Heart left ventricle (tissue), 16 donors: ENCODE measurements at regions of chr10 and their contacts with region 1.

Region 1: DNA sequence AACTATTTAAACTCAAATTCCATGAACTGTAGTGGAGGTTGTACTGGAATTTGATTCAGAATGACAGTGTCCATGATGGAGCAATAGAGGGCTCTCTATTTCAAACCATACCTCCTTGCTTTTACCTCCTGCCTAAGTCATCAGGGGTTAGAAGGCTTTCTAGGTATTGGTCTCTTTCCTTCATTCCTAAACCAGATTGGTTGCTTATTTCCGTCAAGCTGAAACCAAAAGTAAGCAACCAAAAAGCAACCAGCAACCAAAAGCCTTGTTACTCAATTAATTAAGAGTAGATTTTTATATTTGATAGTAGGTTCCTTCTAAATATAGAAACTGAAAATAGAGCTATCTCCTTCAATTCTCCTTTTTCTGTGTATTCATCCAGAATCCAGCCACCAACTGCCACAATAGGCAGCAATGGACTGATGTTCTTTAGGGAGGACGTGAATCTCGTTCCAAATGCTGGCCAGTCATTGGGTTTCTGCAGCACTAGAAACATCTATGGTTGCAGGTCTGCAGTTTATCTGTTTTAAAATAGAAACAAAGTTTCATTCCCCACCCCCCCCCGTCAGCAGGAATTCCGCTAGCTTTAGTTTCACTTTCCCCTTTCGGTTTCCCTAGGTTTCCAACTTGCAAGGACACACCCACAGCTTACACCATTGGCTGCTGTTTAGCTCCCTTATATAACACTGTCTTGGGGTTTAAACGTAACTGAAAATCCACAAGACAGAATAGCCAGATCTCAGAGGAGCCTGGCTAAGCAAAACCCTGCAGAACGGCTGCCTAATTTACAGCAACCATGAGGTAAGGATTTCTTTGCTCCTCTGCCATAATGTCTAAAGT is at the start of gene IFIT1:
- DNase-seq: peak in 4 of 5 donors; percentile 42 to 82 (median 76)
- ATAC-seq: peak; percentile 94 to 97 (median 96)
- H3K4me3 ChIP-seq: peak within 1 kb of the TSS; percentile 28 to 86 (median 60)
- H3K27ac ChIP-seq: peak within 1 kb of the TSS; percentile 64 to 92 (median 85)
- H3K4me1 ChIP-seq: peaks cover 0 to 51% (median 33%) of the 10 kb centered on the region in 12 donors
- H3K27me3 ChIP-seq: no peaks in the 10 kb centered on the region
- CTCF ChIP-seq: no peak
- POLR2A ChIP-seq: peak in 1 of 2 donors; percentile 73
- total RNA-seq, gene IFIT1: 13.8 to 58.2 (median 25.6) TPM

Region 2: GRCh38 chr10:89251409-89252224 is 140.5 kb before region 1 on chr10 and contains the start of gene LIPA:
- intact Hi-C with region 1: loop called in 1 of 10 experiments (anchors 5 kb)
- DNase-seq: peak; percentile 96 to 98 (median 97)
- ATAC-seq: peak; percentile 99 to 100 (median 99)
- H3K4me3 ChIP-seq: peak within 1 kb of the TSS; percentile 70 to 99 (median 88)
- H3K27ac ChIP-seq: peak within 1 kb of the TSS in 11 of 12 donors; percentile 68 to 90 (median 82)
- H3K4me1 ChIP-seq: peaks cover 0 to 36% (median 7%) of the 10 kb centered on the region in 12 donors
- H3K27me3 ChIP-seq: no peaks in the 10 kb centered on the region
- CTCF ChIP-seq: no peak
- POLR2A ChIP-seq: peak in 1 of 2 donors; percentile 54
- total RNA-seq, gene LIPA: 13.6 to 127 (median 18.8) TPM

Region 3: DNA sequence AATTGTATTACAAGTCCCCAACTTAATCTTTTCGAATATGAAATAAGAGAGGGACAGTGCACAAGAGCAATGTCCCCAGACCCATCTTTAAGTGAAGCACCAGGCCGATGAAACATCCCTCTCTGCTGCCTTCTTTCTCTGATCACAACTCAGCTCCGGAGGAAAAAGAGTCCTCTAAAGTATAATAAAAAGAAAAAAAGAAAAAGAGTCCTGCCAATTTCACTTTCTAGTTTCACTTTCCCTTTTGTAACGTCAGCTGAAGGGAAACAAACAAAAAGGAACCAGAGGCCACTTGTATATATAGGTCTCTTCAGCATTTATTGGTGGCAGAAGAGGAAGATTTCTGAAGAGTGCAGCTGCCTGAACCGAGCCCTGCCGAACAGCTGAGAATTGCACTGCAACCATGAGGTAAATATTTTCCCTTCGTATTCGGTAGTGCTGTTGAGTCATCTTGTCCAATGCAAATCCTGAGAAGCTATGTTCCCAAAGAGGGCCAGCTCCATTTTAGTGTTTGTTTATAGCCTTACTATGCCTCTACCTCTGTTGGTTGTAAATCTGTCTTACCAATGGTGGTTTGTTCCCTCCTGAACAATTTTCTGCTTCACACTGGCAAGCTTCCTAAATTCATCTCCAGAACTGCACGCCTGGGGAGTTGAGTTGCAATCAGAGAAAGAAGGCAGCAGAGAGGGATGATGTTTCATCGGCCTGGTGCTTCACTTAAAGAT is 90.3 kb before region 1 on chr10 and contains the start of gene IFIT2:
- intact Hi-C with region 1: loop called in 1 of 10 experiments (anchors 5 kb)
- DNase-seq: peak; percentile 35 to 58 (median 44)
- ATAC-seq: peak; percentile 67 to 86 (median 82)
- H3K4me3 ChIP-seq: peak within 1 kb of the TSS; percentile 20 to 71 (median 56)
- H3K27ac ChIP-seq: peak within 1 kb of the TSS; percentile 74 to 97 (median 90)
- H3K4me1 ChIP-seq: peaks cover 0 to 50% (median 22%) of the 10 kb centered on the region in 12 donors
- H3K27me3 ChIP-seq: no peaks in the 10 kb centered on the region
- CTCF ChIP-seq: no peak
- POLR2A ChIP-seq: peak in 1 of 2 donors; percentile 42
- total RNA-seq, gene IFIT2: 2.3 to 30.2 (median 5.3) TPM

Region 4: GRCh38 chr10:89369156-89370105 is 22.7 kb before region 1 on chr10:
- intact Hi-C with region 1: loop called in 2 of 10 experiments (anchors 2 kb)
- DNase-seq: no peak
- ATAC-seq: peak; percentile 9 to 58 (median 32)
- H3K4me3 ChIP-seq: no peak overlapping the region
- H3K27ac ChIP-seq: peak overlapping the region in 2 of 12 donors; percentile 39 to 44
- H3K4me1 ChIP-seq: peaks cover 6 to 42% (median 23%) of the 10 kb centered on the region in 12 donors
- H3K27me3 ChIP-seq: no peaks in the 10 kb centered on the region
- CTCF ChIP-seq: peak in 11 of 12 donors; percentile 23 to 69 (median 52)
- POLR2A ChIP-seq: no peak

Region 5: GRCh38 chr10:89414146-89414878 is 22.2 kb after region 1 on chr10 and contains the start of gene IFIT5:
- intact Hi-C with region 1: loop called in 1 of 10 experiments (anchors 2 kb)
- DNase-seq: peak; percentile 74 to 87 (median 78)
- ATAC-seq: peak; percentile 79 to 95 (median 92)
- H3K4me3 ChIP-seq: peak within 1 kb of the TSS; percentile 75 to 95 (median 86)
- H3K27ac ChIP-seq: peak within 1 kb of the TSS; percentile 92 to 99 (median 96)
- H3K4me1 ChIP-seq: peaks cover 0 to 53% (median 33%) of the 10 kb centered on the region in 12 donors
- H3K27me3 ChIP-seq: no peaks in the 10 kb centered on the region
- CTCF ChIP-seq: peak in 3 of 12 donors; percentile 23 to 30 (median 25)
- POLR2A ChIP-seq: peak in 1 of 2 donors; percentile 38
- total RNA-seq, gene IFIT5: 5.4 to 21.0 (median 10.4) TPM